Thyroid gland (tissue), 4 donors: ENCODE measurements at regions of chr2 and their contacts with region 1.

Region 1: DNA sequence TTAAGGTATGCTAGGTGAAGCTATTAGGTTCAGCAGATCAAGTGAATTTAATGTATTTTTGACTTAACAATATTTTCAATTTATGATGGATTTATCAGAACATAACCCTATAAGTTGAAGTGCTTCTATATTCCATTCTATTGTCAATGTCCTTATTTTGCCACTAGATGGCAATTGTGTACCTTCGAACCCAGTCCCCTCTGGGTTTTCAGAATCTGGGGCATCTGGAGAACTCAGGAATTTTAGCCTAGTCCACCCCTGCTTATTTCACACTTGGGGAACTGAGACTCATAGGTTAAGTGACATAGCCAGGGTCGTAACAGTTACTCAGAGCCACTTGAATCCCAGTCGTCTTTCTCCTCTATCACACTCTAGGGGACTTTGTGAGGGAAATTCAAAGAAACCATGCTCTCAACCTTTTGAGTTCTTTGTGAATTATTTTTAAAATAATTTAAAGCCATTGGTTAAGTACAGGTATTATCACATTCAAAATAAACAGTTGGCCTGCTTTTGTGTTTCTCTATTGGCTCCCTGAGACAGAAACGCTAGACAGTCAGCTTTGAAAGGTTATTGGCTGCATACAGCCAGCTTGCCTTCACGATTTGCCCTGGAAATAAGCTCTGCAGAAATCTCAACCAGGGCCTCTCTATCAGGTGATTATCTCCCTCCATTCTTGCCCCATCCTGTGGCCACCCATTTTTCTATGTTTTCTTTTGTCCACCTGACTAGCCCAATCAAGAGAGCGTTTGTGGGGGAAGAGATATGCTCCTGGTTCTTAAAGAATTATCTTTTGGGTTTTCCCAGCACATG is 145.0 kb downstream of the TTC27 start:
- DNase-seq: no peak
- H3K4me3 ChIP-seq: no peak overlapping the region
- H3K27ac ChIP-seq: no peak overlapping the region
- H3K4me1 ChIP-seq: no peaks in the 10 kb centered on the region
- H3K27me3 ChIP-seq: no peaks in the 10 kb centered on the region
- CTCF ChIP-seq: peak in 5 of 6 experiments; percentile 31 to 85 (median 65)
- POLR2A ChIP-seq: no peak

Region 2: GRCh38 chr2:32852856-32853255 is 80.0 kb after region 1 on chr2:
- intact Hi-C with region 1: no loop called
- DNase-seq: peak; percentile 37 to 57
- H3K4me3 ChIP-seq: no peak overlapping the region
- H3K27ac ChIP-seq: no peak overlapping the region
- H3K4me1 ChIP-seq: peaks cover 25% of the 10 kb centered on the region in 2 donors
- H3K27me3 ChIP-seq: no peaks in the 10 kb centered on the region
- CTCF ChIP-seq: no peak
- POLR2A ChIP-seq: no peak

Region 3: GRCh38 chr2:32946314-32947075 is 173.7 kb after region 1 on chr2 and contains the start of gene LTBP1:
- intact Hi-C with region 1: loop called (anchors 5 kb)
- DNase-seq: peak; percentile 52 to 62
- H3K4me3 ChIP-seq: peak within 1 kb of the TSS; percentile 33 to 89 (median 48)
- H3K27ac ChIP-seq: peak within 1 kb of the TSS in 1 of 3 donors; percentile 31
- H3K4me1 ChIP-seq: no peaks in the 10 kb centered on the region
- H3K27me3 ChIP-seq: no peaks in the 10 kb centered on the region
- CTCF ChIP-seq: peak in 5 of 6 experiments; percentile 29 to 80 (median 57)
- POLR2A ChIP-seq: peak in 1 of 2 donors; percentile 39
- total RNA-seq, gene LTBP1: 5.1 to 12.9 (median 10.7) TPM

Region 4: DNA sequence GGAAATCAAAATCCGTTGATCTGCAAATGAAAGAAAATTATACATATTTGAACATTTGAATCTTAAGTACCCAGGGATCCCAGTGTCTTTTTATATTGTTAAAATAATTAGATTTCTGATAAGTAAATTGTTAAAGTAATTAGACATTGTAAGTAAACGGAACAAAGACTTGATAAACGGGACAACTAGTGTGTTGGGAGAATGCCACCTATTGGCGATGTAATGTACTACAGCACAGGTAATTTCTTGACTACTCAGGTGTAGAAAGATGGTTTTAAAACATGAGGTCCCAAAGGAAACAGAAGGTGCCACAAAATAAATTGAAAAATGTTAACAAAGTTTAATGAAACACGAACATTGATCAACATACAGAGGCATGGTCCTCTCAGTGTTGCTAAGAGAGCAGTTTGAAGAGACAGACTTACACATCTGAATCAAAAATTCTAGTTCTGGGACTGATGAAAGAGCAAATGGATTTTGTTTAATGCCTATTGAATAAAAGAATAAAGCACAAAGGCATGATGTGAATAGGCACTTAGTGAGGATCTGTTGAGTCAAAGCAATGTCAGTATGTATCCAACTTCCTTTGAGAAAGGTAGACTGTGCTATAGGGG is 600.2 kb after region 1 on chr2:
- intact Hi-C with region 1: loop called (anchors 10 kb)
- DNase-seq: peak in 1 of 2 donors; percentile 7
- H3K4me3 ChIP-seq: no peak overlapping the region
- H3K27ac ChIP-seq: no peak overlapping the region
- H3K4me1 ChIP-seq: no peaks in the 10 kb centered on the region
- H3K27me3 ChIP-seq: no peaks in the 10 kb centered on the region
- CTCF ChIP-seq: peak; percentile 44 to 78 (median 72)
- POLR2A ChIP-seq: no peak

Region 5: GRCh38 chr2:33387416-33387815 is 614.6 kb after region 1 on chr2:
- intact Hi-C with region 1: no loop called
- DNase-seq: no peak
- H3K4me3 ChIP-seq: no peak overlapping the region
- H3K27ac ChIP-seq: no peak overlapping the region
- H3K4me1 ChIP-seq: no peaks in the 10 kb centered on the region
- H3K27me3 ChIP-seq: no peaks in the 10 kb centered on the region
- CTCF ChIP-seq: no peak
- POLR2A ChIP-seq: no peak